ENCODE measurements at regions of chr2 and their contacts with region 1.

Region 1: DNA sequence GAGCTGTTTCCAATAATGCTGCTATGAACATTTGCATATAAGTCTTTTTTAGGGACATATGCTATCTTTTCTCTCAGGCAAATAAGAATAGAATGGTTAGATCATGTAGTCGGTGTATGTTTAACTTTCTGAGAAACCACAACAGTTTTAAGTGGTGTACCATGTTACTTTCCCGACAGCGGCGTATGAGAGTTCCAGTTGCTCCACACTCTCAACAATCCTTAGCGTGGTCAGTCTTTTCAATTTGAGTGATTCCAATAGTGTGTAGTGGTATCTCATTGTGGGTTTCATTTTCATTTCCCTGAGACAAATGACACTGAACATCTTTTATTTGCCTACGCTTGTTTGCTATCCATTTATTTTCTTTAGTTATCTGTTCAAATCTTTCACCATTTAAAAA is 149.5 kb downstream of the ACOXL start:
- DNase-seq: no peak
- H3K4me3 Mint-ChIP-seq: no peak overlapping the region
- H3K27ac Mint-ChIP-seq: peak overlapping the region; percentile 19
- H3K4me1 Mint-ChIP-seq: peaks cover 22% of the 10 kb centered on the region
- H3K27me3 Mint-ChIP-seq: peaks cover 45% of the 10 kb centered on the region

Region 2: DNA sequence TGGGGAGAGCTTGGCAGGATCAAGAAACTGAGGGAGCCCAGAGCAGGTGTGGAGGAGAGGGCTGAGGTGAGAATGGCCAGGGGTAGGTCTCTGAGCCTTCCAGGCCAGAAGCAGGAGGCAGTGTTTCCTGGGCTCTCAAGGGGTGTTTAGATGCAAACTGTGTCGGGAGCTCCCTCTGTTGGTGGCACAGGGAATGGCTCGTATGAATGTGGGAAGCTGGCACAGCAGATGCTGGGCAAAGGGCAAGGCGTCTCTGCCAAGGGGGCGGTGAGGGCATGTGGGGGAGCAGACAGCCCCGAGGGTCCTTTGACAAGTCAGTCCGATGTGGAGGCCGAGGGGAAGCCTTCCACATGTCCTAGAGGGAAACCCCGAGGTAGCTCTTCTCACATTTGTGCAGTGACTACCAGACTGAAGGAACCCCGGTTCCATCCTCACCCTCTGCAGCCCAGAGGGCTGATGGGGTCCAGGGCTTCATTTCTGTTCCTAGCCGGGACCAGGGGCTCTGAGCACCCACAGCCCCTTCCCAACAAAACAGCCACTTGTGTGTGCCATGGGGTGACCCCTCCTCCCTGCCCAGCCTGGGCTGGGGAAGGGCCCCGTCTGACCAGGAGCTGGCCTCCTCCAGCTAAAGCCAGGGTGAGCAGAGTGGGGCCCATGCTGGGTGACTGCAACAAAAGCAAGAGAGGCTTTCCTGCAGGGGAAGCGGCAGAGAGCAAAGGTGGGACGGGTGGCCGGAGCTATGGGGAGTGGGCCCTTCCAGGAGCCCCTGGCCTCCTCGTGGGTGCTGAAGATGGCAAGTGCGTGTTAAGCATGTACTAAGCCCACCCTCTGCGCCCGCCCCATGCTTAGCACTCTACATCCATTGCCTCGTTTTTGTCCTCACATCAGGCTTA is 1371.5 kb before region 1 on chr2:
- intact Hi-C with region 1: no loop called
- DNase-seq: peak; percentile 51
- H3K4me3 Mint-ChIP-seq: no peak overlapping the region
- H3K27ac Mint-ChIP-seq: no peak overlapping the region
- H3K4me1 Mint-ChIP-seq: peaks cover 9% of the 10 kb centered on the region
- H3K27me3 Mint-ChIP-seq: no peaks in the 10 kb centered on the region

Region 3: DNA sequence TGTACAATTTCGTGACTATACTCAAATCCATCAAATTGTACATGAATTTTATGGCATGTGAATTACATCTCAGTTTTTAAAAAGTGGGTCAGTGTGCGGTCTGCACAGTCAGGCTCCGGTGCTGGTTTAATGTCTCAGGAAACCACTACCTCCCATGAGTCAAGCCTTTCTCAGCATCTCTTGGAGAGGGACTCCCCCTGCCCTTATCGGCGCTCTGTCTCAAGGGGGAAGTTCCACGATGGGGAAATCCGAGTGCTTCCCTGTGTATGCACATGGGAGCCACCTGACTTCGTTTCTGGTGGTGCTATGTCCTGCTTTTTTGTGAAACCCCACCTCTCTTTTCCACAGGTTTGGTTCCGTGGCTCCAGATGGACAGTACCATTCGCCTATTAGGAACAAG is 77.0 kb before region 1 on chr2:
- intact Hi-C with region 1: loop called (anchors 1 kb)
- DNase-seq: peak; percentile 66
- H3K4me3 Mint-ChIP-seq: peak overlapping the region; percentile 45
- H3K27ac Mint-ChIP-seq: peak overlapping the region; percentile 46
- H3K4me1 Mint-ChIP-seq: peaks cover 25% of the 10 kb centered on the region
- H3K27me3 Mint-ChIP-seq: peaks cover 42% of the 10 kb centered on the region

Region 4: DNA sequence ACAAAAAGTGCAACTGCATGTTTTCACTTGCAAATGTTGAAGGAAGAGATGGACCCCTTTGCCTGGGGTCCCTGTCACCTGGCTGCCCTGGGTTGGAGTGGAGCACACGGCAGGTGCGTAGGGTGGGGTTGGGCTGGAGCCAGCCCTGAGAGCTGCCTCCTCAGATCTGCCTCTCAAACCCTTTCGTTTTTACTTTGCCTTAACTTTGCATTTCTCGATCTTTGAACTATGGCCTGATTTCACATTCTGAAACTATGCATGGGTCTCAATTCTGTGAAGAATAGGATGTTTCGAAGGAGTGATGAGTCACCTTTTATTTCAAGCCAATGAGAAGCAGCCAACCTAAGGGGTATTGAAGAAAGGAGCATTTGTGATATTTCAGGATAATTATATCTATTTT is 16.7 kb before region 1 on chr2:
- intact Hi-C with region 1: loop called (anchors 2 kb)
- DNase-seq: no peak
- H3K4me3 Mint-ChIP-seq: peak overlapping the region; percentile 48
- H3K27ac Mint-ChIP-seq: peak overlapping the region; percentile 32
- H3K4me1 Mint-ChIP-seq: peaks cover 76% of the 10 kb centered on the region
- H3K27me3 Mint-ChIP-seq: peaks cover 19% of the 10 kb centered on the region

Region 5: GRCh38 chr2:110871637-110872036 is 10.3 kb before region 1 on chr2:
- intact Hi-C with region 1: loop called (anchors 1 kb)
- DNase-seq: peak; percentile 34
- H3K4me3 Mint-ChIP-seq: no peak overlapping the region
- H3K27ac Mint-ChIP-seq: no peak overlapping the region
- H3K4me1 Mint-ChIP-seq: peaks cover 69% of the 10 kb centered on the region
- H3K27me3 Mint-ChIP-seq: peaks cover 14% of the 10 kb centered on the region

Region 6: DNA sequence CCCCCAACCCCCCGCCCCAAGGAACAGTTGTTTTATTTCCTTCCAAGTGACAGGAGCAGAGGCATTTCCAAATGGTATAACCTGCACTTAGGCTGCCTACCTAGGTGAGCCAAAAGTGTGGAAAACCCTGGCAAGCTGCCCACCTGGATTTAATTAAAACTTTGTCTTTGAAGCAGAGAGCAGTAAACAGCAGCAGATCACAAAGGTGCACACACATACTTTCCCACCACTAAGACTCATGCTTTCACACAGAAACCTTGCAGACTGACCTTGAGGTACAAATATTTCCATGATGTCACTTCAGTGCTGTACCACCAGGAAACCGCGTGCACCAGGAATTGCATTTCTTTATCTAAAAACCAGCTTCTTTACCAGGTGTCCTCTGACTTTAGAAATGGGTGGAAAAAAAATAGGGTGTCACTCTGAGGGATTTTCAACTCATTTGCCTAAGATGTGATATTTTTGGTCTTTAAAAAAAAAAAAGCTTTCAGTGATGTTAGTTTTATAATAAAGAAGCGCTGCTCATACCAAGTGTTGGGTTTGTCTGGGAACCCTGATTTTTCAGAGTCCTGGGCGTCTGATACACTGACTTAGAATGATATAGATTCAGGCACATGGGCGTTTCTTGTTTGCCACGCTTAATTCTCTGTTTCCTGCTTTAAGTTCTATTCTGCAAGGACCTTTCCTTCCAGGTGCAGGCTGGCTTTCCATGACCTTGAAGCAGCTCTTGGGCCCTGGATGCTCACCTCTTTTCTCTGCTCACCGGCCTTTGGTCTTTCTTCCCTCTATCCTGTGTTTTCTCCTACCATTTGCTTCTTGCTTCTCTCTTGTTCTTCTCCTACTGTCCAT is 168.1 kb after region 1 on chr2:
- intact Hi-C with region 1: loop called (anchors 1 kb)
- DNase-seq: no peak
- H3K4me3 Mint-ChIP-seq: peak overlapping the region; percentile 24
- H3K27ac Mint-ChIP-seq: peak overlapping the region; percentile 82
- H3K4me1 Mint-ChIP-seq: peaks cover 48% of the 10 kb centered on the region
- H3K27me3 Mint-ChIP-seq: peaks cover 9% of the 10 kb centered on the region

Region 7: GRCh38 chr2:111091811-111092211 is 209.9 kb after region 1 on chr2:
- intact Hi-C with region 1: loop called (anchors 5 kb)
- DNase-seq: no peak
- H3K4me3 Mint-ChIP-seq: no peak overlapping the region
- H3K27ac Mint-ChIP-seq: no peak overlapping the region
- H3K4me1 Mint-ChIP-seq: peaks cover 14% of the 10 kb centered on the region
- H3K27me3 Mint-ChIP-seq: peaks cover 61% of the 10 kb centered on the region

Measured in activated T-helper 1 cell treated with anti-CD3 and anti-CD28 coated beads, Interleukin-12 subunit alpha, Interleukin-12 subunit beta, Interleukin-2, Interleukin-4 antibody, amounts not matched to agents 30 ng/mL and 10 ng/mL and 1 ng/mL, durations not matched to agents 14 hours and 24 hours and 36 hours (primary cell).